ENCODE measurements at regions of chr15 and their contacts with region 1.

Region 1: DNA sequence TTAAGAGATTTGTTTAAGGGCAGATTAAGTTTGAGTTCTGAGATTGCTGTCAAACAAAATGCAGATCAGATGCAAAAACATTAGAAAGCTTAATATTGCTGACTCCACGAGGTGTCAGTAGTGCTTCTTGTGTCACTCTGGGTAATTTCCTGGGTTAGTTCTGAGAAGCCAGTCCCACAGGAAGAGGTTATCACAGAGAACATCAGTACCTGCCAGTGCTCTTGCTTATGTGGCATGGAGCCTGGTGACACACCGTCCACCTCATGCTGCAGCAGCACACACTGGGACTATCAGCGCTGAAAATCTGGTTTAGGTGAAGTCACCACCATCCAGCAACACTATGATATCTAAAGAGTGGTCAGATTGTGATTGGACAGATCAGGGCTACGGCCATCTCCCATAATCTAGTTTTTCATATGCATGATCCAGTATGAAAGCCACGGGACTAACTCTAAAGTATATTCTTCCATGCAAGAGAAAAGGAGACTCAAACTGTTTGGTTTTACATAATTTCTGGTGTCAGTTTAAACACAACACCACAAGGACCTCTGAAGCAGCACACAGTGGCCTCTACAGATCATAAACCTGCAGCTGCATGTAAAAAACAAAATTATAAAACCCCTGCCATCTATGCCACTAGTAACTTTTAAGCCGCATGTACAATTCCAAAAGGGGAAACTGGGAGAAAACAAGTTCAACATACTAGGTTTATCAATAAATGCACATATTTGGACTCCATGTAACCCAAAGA is 36.1 kb upstream of the MYO5C start:
- DNase-seq: peak; percentile 2 to 89 (median 38)
- ATAC-seq: peak; percentile 96
- H3K4me3 ChIP-seq: no peak overlapping the region
- H3K4me3 Mint-ChIP-seq: no peak overlapping the region
- H3K27ac ChIP-seq: peak overlapping the region in 1 of 2 donors; percentile 7
- H3K27ac Mint-ChIP-seq: no peak overlapping the region
- H3K4me1 ChIP-seq: peaks cover 8% of the 10 kb centered on the region
- H3K4me1 Mint-ChIP-seq: peaks cover 10% of the 10 kb centered on the region
- H3K27me3 ChIP-seq: no peaks in the 10 kb centered on the region
- H3K27me3 Mint-ChIP-seq: no peaks in the 10 kb centered on the region
- CTCF ChIP-seq: peak; percentile 68

Region 2: DNA sequence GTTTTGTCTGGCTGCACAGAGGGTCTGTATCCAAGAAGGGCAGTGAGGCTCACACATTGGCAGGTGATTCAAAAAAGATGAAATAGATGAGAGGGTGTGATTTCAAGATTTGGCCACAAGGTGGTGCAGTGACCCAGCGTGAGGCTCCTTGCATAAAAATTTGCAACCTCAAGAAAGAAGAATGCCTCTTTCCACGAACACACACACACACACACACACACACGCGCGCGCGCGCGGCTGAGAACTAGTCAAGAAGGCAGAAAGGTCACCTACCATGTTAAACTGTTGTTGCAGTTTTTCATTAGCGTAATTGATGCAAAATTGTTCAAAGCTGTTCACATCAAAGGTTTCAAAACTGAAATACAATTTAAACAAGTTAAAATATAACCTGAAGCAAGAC is 75.3 kb before region 1 on chr15:
- CTCF ChIA-PET with region 1: interaction called, 4 read pairs
- POLR2A ChIA-PET with region 1: interaction called, 5 read pairs
- intact Hi-C with region 1: loop called in 1 of 2 experiments (anchors 1 kb)
- DNase-seq: peak; percentile 58 to 90 (median 72)
- ATAC-seq: peak; percentile 96
- H3K4me3 ChIP-seq: no peak overlapping the region
- H3K4me3 Mint-ChIP-seq: peak overlapping the region; percentile 79
- H3K27ac ChIP-seq: no peak overlapping the region
- H3K27ac Mint-ChIP-seq: peak overlapping the region; percentile 34
- H3K4me1 ChIP-seq: peaks cover 14% of the 10 kb centered on the region
- H3K4me1 Mint-ChIP-seq: peaks cover 12% of the 10 kb centered on the region
- H3K27me3 ChIP-seq: no peaks in the 10 kb centered on the region
- H3K27me3 Mint-ChIP-seq: no peaks in the 10 kb centered on the region
- CTCF ChIP-seq: peak; percentile 76

Region 3: DNA sequence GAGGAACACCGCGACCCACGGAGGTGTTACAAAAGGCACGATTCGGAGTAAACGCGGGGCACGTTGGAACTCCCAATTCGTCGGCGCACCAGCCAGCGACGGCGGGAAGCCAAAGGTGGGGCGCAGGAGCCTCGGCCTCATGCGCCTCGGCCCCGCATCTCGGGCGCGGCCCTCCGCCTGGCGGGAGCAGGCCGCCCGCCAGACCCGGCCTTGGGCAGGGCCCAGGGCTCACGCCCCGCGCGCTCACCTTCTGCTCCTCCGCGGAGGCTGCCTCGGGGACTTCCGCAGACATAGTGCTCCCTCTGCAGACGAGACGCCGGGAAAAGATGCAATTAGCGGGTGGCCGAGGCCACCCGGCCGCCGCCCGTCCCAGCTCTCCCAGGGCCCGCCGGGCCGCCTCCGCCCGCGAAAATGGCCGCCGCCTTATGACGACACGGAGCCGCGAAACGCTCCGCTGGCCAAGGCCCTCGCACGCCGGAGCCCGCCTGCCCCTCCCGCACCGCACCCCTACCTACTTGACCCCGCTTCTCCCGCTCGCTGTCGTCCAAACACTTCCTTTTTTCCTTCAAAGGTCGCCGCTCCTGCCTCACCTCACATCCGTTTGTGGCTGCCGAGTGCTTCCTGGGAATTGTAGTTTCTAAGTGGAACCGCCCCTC is 237.1 kb after region 1 on chr15 and contains the start of gene ARPP19:
- CTCF ChIA-PET with region 1: interaction called, 3 read pairs
- POLR2A ChIA-PET with region 1: no interaction called
- intact Hi-C with region 1: loop called in 1 of 2 experiments (anchors 5 kb)
- DNase-seq: peak; percentile 60 to 93 (median 71)
- ATAC-seq: peak; percentile 72
- H3K4me3 ChIP-seq: peak within 1 kb of the TSS; percentile 75
- H3K4me3 Mint-ChIP-seq: peak within 1 kb of the TSS; percentile 99
- H3K27ac ChIP-seq: peak within 1 kb of the TSS; percentile 91 to 93
- H3K27ac Mint-ChIP-seq: peak within 1 kb of the TSS; percentile 98
- H3K4me1 ChIP-seq: peaks cover 35% of the 10 kb centered on the region
- H3K4me1 Mint-ChIP-seq: peaks cover 45% of the 10 kb centered on the region
- H3K27me3 ChIP-seq: no peaks in the 10 kb centered on the region
- H3K27me3 Mint-ChIP-seq: no peaks in the 10 kb centered on the region
- CTCF ChIP-seq: peak; percentile 24
- total RNA-seq, gene ARPP19: 134 to 146 TPM

Region 4: DNA sequence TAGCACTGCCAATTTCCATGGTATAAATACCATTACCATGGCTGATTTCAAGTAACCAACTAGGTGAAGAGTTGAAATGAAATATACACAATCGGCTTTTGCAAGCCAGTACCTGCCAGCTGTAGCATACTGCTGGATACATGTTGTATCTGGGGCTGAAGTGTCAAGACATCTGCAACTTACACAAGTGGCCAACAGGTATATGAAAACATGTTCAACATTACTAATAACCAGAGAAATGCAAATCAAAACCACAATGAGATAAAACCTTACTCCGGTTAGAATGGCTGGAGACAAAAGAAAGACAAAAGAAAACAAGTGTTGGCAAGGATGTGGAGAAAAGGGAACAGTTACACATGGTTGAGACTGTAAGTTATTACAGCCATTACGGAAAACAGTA is 335.9 kb after region 1 on chr15:
- CTCF ChIA-PET with region 1: no interaction called
- POLR2A ChIA-PET with region 1: no interaction called
- intact Hi-C with region 1: loop called in 1 of 2 experiments (anchors 10 kb)
- DNase-seq: no peak
- ATAC-seq: no peak
- H3K4me3 ChIP-seq: no peak overlapping the region
- H3K4me3 Mint-ChIP-seq: no peak overlapping the region
- H3K27ac ChIP-seq: no peak overlapping the region
- H3K27ac Mint-ChIP-seq: no peak overlapping the region
- H3K4me1 ChIP-seq: no peaks in the 10 kb centered on the region
- H3K4me1 Mint-ChIP-seq: peaks cover 37% of the 10 kb centered on the region
- H3K27me3 ChIP-seq: no peaks in the 10 kb centered on the region
- H3K27me3 Mint-ChIP-seq: no peaks in the 10 kb centered on the region
- CTCF ChIP-seq: no peak

Region 5: DNA sequence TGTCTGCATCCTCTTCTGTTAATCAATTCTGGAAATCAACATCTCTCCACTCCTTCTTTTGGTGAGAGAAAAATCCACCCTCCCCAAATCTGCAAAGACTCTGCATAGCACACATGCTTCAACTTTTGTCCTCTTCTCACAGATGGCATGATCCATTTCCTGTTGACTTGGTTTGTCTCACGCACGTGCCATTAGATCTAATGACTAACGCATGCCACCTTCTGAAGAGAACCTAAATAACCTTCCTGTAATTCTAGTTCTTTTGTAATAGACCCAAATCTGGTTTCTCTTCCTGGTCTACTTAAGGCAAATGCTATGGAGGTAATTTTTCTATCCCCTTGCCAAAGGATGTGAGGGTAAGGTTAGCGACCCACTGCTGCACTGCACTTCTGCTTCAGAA is 398.5 kb after region 1 on chr15:
- CTCF ChIA-PET with region 1: interaction called, 12 read pairs
- POLR2A ChIA-PET with region 1: no interaction called
- intact Hi-C with region 1: loop called (anchors 1 kb)
- DNase-seq: peak in 13 of 14 experiments; percentile 10 to 86 (median 38)
- ATAC-seq: peak; percentile 100
- H3K4me3 ChIP-seq: no peak overlapping the region
- H3K4me3 Mint-ChIP-seq: no peak overlapping the region
- H3K27ac ChIP-seq: no peak overlapping the region
- H3K27ac Mint-ChIP-seq: peak overlapping the region; percentile 57
- H3K4me1 ChIP-seq: peaks cover 16% of the 10 kb centered on the region
- H3K4me1 Mint-ChIP-seq: peaks cover 9% of the 10 kb centered on the region
- H3K27me3 ChIP-seq: no peaks in the 10 kb centered on the region
- H3K27me3 Mint-ChIP-seq: no peaks in the 10 kb centered on the region
- CTCF ChIP-seq: peak; percentile 41